HEK293 (cell line): ENCODE measurements at regions of chr14 and their contacts with region 1.

Region 1: GRCh38 chr14:103562429-103563225 is at the starts of genes BAG5 and COA8:
- H3K4me3 ChIP-seq: peak within 1 kb of the TSS; percentile 100
- H3K27ac ChIP-seq: peak within 1 kb of the TSS; percentile 96
- H3K4me1 ChIP-seq: peaks cover 31% of the 10 kb centered on the region
- CTCF ChIP-seq: peak; percentile 19; the same call in 1 of the 2 replicates

Region 2: DNA sequence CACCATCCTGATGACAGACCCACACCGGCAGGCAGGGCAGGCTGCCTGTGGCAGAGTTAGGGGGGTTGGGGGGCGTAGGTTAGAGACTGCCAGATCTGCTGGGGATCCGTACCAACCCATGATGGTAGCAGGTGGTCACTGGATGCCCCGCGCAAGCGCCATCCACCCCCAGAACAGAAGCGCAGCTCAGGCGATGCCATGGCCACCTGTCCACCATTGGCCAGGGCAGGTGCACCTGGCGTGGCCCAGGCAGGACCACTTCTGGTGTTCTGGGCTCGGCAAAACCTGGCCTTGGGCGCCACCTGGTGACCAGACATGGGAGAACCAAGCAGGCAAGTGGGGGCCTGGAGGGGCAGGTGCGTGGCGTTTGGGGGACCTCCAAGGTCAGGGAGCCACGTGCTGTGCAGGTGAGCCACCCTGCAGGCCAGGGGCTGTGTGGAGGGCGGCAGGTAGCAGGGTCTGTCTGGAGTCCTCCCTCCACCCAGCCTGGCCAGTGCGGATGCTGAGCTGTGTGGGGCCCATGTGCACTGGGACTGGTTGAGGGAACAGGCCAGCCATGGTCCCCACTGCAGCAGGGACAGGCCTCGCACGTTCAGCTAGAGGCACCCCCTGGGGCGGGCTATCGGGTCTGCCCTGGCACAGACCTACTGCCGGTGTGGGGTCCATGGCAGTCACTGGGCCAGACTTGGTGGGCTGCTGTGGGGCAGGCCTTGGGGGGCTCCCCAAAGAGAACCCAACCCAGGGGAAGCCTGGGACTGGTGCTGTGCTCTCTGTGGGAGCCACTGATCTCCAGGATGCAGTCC is 15.8 kb before region 1 on chr14:
- CTCF ChIA-PET with region 1: interaction called, 21 read pairs
- POLR2A ChIA-PET with region 1: interaction called, 6 read pairs
- H3K4me3 ChIP-seq: no peak overlapping the region
- H3K27ac ChIP-seq: no peak overlapping the region
- H3K4me1 ChIP-seq: no peaks in the 10 kb centered on the region; the same call in 1 of the 2 replicates
- CTCF ChIP-seq: peak; percentile 99